Motor neuron (in vitro differentiated cells): ENCODE measurements at regions of chr15 and their contacts with region 1.

Region 1: GRCh38 chr15:59741274-59741906 is 52.3 kb upstream of the BNIP2 start:
- ATAC-seq: peak; percentile 78 to 97 (median 88)
- H3K4me3 ChIP-seq: no peak overlapping the region
- H3K27ac ChIP-seq: no peak overlapping the region
- H3K4me1 ChIP-seq: peaks cover 0 to 19% of the 10 kb centered on the region in 2 donors

Region 2: DNA sequence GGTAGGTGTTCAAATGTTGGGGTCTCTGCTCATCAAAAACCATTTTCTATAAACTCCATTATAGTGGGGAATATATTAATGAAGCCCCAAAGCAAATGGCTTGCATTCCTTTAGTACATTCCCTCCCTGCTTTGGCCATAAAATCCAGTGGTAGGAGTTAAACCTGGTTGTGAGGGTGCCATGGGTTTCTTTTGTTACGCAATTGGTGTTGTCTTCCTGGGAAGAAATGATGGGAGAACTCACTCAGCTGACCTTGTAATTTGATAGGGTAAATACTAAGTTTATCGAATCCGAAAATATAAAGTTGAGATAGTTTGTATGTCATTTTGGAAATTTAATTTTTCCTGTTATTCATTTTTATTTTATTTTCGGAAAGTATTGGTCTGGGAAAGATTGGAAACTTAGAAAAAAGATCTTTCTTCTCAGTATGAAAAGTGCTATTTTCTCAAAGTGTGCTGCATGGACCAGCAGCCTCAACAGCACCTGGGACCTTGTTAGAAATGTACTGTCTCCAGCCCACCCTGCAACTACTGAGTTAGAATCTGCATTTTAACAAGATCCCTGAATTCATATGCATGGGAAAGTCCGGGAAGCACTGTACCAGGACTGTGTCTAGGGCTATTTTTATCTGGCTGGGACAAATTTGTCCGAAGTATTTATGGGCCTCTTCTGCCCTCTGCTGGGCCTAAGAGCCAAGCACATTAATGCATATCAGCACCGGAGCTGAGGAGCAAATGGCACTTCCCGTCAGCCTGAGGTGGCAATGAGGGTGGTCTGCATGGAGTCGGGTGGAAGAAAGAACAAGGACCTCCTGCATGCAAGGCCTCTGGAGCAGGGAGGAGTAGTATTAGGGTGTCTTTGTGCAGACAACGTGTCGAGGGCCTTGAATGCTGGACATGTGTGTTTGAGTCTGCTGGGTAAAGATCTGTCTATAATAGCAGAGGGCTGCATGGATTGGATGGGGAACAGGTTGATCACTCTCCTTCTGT is 248.7 kb before region 1 on chr15:
- in situ Hi-C with region 1: no loop called
- ATAC-seq: peak; percentile 95 to 100 (median 99)
- H3K4me3 ChIP-seq: no peak overlapping the region
- H3K27ac ChIP-seq: no peak overlapping the region
- H3K4me1 ChIP-seq: no peaks in the 10 kb centered on the region

Region 3: GRCh38 chr15:60155666-60156065 is 414.3 kb after region 1 on chr15:
- in situ Hi-C with region 1: loop called in 1 of 9 experiments (anchors 25 kb)
- ATAC-seq: peak in 2 of 8 experiments; percentile 81 to 86
- H3K4me3 ChIP-seq: no peak overlapping the region
- H3K27ac ChIP-seq: no peak overlapping the region
- H3K4me1 ChIP-seq: peaks cover 6 to 12% of the 10 kb centered on the region in 2 donors

Region 4: GRCh38 chr15:60299452-60300047 is 558.2 kb after region 1 on chr15:
- in situ Hi-C with region 1: loop called in 4 of 9 experiments (anchors 25 kb)
- ATAC-seq: peak; percentile 93 to 99 (median 98)
- H3K4me3 ChIP-seq: no peak overlapping the region
- H3K27ac ChIP-seq: peak overlapping the region; percentile 23 to 38
- H3K4me1 ChIP-seq: peaks cover 10% of the 10 kb centered on the region in 2 donors

Region 5: GRCh38 chr15:60326824-60327654 is 585.6 kb after region 1 on chr15:
- in situ Hi-C with region 1: loop called in 7 of 9 experiments (anchors 10 to 25 kb)
- ATAC-seq: peak in 6 of 8 experiments; percentile 30 to 57 (median 42)
- H3K4me3 ChIP-seq: no peak overlapping the region
- H3K27ac ChIP-seq: no peak overlapping the region
- H3K4me1 ChIP-seq: peaks cover 24 to 34% of the 10 kb centered on the region in 2 donors